ENCODE measurements at regions of chr11 and their contacts with region 1.

Region 1: DNA sequence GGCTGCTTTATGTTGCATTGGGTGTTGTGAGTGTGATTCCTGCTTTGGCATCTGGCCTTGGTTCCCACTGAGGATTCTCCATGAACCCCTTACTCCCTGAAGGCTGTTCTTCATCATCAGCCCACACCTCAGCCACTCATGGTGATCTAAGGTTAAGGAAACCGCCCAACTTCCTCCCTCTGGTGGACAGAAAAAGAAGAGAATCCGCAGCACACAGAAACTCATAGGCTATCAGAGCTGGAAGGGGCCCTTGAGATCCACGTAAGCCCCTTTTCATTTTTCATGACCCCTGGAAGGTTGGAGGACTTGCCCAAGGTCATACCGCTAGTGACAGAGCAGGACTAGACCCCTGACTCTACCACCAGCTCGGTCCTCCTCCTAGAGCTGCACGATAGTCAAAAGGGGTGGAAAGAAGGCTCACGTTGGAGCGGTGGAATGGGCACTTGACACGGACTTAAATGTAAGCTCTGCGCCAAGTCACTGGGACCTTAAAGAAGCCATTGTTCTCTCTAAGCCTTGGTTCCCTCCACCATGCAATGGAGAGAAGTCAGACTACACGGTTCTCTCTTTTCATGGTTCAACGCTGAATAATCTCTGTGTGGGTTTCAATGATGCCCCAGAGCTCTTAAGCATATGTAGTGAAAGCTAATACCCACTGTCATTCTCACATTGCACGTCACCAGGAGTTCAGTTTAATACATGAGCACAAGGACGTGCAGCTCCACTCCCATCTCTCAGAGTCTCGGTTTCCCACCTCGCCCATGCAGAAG is 83.6 kb upstream of the CRTAM start:
- DNase-seq: no peak
- ATAC-seq: peak; percentile 48
- H3K4me3 Mint-ChIP-seq: no peak overlapping the region
- H3K27ac Mint-ChIP-seq: no peak overlapping the region
- H3K4me1 Mint-ChIP-seq: peaks cover 28% of the 10 kb centered on the region
- H3K27me3 Mint-ChIP-seq: no peaks in the 10 kb centered on the region
- CTCF ChIP-seq: no peak

Region 2: DNA sequence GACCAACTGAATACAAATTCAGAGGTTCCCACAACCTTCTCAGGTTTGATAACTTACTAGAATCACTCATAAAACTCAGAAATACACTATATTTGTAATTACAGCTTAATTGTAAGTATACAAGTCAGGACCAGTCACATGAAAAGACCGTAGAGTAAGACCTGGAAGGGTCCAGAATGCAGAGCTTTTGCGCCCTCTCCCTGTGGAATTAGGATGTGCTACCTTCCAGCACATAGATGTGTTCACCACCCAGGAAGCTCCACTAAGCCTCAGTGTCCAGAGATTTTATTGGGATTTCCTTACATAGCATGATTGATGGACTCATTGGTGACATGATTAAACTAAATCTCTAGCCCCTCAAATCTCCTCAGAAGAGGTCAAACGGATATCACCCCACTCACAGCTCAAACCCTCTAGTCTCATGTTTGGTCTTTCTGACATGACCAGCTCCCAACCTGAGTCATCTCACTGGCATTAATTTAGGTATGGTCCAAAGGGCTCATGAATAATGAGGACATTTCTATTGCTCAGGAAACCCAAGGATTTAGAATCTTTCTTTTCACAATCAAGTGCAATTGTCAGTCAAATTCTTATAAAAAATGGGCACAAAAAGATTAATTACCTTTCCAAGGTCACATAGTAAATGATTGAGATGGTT is 176.4 kb before region 1 on chr11:
- CTCF ChIA-PET with region 1: interaction called, 44 read pairs
- POLR2A ChIA-PET with region 1: no interaction called
- intact Hi-C with region 1: loop called (anchors 1 kb)
- DNase-seq: no peak
- ATAC-seq: no peak
- H3K4me3 Mint-ChIP-seq: no peak overlapping the region
- H3K27ac Mint-ChIP-seq: no peak overlapping the region
- H3K4me1 Mint-ChIP-seq: peaks cover 10% of the 10 kb centered on the region
- H3K27me3 Mint-ChIP-seq: peaks cover 4% of the 10 kb centered on the region
- CTCF ChIP-seq: no peak

Region 3: GRCh38 chr11:122655527-122656072 is 99.1 kb before region 1 on chr11 and contains the start of gene UBASH3B:
- CTCF ChIA-PET with region 1: interaction called, 79 read pairs
- POLR2A ChIA-PET with region 1: interaction called, 11 read pairs
- intact Hi-C with region 1: loop called (anchors 1 kb)
- DNase-seq: peak; percentile 62
- ATAC-seq: peak; percentile 78
- H3K4me3 Mint-ChIP-seq: peak within 1 kb of the TSS; percentile 96
- H3K27ac Mint-ChIP-seq: peak within 1 kb of the TSS; percentile 79
- H3K4me1 Mint-ChIP-seq: peaks cover 21% of the 10 kb centered on the region
- H3K27me3 Mint-ChIP-seq: peaks cover 22% of the 10 kb centered on the region
- CTCF ChIP-seq: no peak
- total RNA-seq, gene UBASH3B: 2.9 and 4.3 TPM in 2 replicates

Region 4: GRCh38 chr11:122697636-122698167 is 57.0 kb before region 1 on chr11:
- CTCF ChIA-PET with region 1: interaction called, 18 read pairs
- POLR2A ChIA-PET with region 1: no interaction called
- intact Hi-C with region 1: no loop called
- DNase-seq: no peak
- ATAC-seq: peak; percentile 91
- H3K4me3 Mint-ChIP-seq: peak overlapping the region; percentile 56
- H3K27ac Mint-ChIP-seq: peak overlapping the region; percentile 65
- H3K4me1 Mint-ChIP-seq: peaks cover 74% of the 10 kb centered on the region
- H3K27me3 Mint-ChIP-seq: no peaks in the 10 kb centered on the region
- CTCF ChIP-seq: no peak

Region 5: DNA sequence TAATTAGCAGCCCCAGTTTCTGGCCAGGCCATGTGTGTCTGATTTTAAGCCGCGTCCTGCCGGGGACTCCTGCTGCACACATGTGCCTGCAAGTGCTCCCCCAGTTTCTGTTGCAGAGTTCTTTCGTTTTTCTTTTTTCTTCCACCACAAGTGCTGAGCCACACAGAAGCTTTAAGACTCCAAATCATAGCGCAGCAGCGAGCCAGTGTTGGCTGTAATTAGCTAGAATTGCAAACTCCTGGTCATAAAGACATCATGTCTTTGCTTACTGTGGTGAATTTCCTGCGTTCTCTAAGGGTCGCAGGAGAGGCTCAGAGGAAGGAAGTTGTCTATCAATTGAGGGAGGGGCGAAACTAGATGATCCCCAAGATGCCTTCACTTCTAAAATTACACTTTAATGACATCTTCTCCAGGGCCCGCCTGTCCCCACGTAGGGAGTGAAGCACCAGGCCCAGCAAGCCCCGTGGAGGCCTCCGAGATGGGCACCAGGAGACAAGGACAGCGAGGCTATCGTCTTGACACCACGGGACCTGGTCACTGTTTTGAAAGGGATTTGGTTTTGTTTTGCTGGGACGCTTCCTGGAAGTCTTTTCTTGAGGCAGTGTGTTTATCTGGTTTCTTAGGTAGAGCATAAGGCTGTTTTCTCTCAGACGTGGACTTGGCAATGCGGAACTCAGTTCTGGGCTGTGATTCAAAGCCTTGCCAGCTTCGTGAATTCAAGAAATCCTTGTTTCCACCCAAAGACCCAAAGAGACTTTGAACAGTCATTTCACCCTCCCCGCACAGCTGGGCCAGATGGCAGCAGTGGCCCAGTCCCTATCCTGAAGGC is 27.4 kb before region 1 on chr11:
- CTCF ChIA-PET with region 1: interaction called, 10 read pairs
- POLR2A ChIA-PET with region 1: interaction called, 6 read pairs
- intact Hi-C with region 1: no loop called
- DNase-seq: no peak
- ATAC-seq: peak; percentile 57
- H3K4me3 Mint-ChIP-seq: peak overlapping the region; percentile 81
- H3K27ac Mint-ChIP-seq: peak overlapping the region; percentile 59
- H3K4me1 Mint-ChIP-seq: peaks cover 46% of the 10 kb centered on the region
- H3K27me3 Mint-ChIP-seq: peaks cover 7% of the 10 kb centered on the region
- CTCF ChIP-seq: no peak

Region 6: GRCh38 chr11:122743949-122744348 is 10.8 kb before region 1 on chr11:
- CTCF ChIA-PET with region 1: interaction called, 41 read pairs
- POLR2A ChIA-PET with region 1: interaction called, 16 read pairs
- intact Hi-C with region 1: loop called (anchors 1 kb)
- DNase-seq: peak; percentile 51
- ATAC-seq: peak; percentile 51
- H3K4me3 Mint-ChIP-seq: no peak overlapping the region
- H3K27ac Mint-ChIP-seq: no peak overlapping the region
- H3K4me1 Mint-ChIP-seq: peaks cover 12% of the 10 kb centered on the region
- H3K27me3 Mint-ChIP-seq: no peaks in the 10 kb centered on the region
- CTCF ChIP-seq: no peak

Region 7: GRCh38 chr11:122781378-122782195 is 26.8 kb after region 1 on chr11:
- CTCF ChIA-PET with region 1: interaction called, 69 read pairs
- POLR2A ChIA-PET with region 1: interaction called, 3 read pairs
- intact Hi-C with region 1: loop called (anchors 1 kb)
- DNase-seq: peak; percentile 64
- ATAC-seq: peak; percentile 95
- H3K4me3 Mint-ChIP-seq: no peak overlapping the region
- H3K27ac Mint-ChIP-seq: no peak overlapping the region
- H3K4me1 Mint-ChIP-seq: no peaks in the 10 kb centered on the region
- H3K27me3 Mint-ChIP-seq: no peaks in the 10 kb centered on the region
- CTCF ChIP-seq: peak; percentile 85